ENCODE measurements at regions of chr17 and their contacts with region 1.

Region 1: DNA sequence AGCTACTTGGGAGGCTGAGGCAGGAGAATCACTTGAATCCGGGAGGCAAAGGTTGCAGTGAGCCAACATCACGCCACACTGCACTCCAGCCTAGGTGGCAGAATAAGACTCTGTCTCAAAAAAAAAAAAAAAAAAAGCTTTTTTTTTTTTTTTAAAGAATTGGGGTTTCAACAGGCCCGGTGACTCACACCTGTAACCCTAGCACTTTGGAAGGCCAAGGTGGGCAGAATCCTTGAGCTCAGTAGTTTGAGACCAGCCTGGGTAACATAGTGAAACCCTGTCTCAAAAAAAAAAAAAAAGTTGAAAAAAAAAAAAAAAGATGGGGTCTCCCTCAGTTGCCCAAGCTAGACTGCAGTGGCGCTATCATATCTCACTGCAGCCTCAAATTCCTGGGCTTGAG is 6.6 kb upstream of the HEXIM2 start:
- DNase-seq: no peak
- ATAC-seq: no peak
- H3K4me3 Mint-ChIP-seq: no peak overlapping the region
- H3K27ac Mint-ChIP-seq: no peak overlapping the region; the same call in 1 of the 2 replicates
- H3K4me1 Mint-ChIP-seq: peaks cover 36% of the 10 kb centered on the region
- H3K27me3 Mint-ChIP-seq: no peaks in the 10 kb centered on the region
- CTCF ChIP-seq: no peak

Region 2: GRCh38 chr17:45060797-45061605 is 94.0 kb before region 1 on chr17 and contains the start of gene NMT1:
- CTCF ChIA-PET with region 1: no interaction called
- POLR2A ChIA-PET with region 1: no interaction called
- DNase-seq: peak; percentile 98
- ATAC-seq: peak; percentile 96
- H3K4me3 Mint-ChIP-seq: peak within 1 kb of the TSS; percentile 99
- H3K27ac Mint-ChIP-seq: peak within 1 kb of the TSS; percentile 100
- H3K4me1 Mint-ChIP-seq: peaks cover 4% of the 10 kb centered on the region
- H3K27me3 Mint-ChIP-seq: no peaks in the 10 kb centered on the region
- CTCF ChIP-seq: no peak
- total RNA-seq, gene NMT1: 152 to 162 TPM (median 153 TPM) in 3 replicates

Region 3: DNA sequence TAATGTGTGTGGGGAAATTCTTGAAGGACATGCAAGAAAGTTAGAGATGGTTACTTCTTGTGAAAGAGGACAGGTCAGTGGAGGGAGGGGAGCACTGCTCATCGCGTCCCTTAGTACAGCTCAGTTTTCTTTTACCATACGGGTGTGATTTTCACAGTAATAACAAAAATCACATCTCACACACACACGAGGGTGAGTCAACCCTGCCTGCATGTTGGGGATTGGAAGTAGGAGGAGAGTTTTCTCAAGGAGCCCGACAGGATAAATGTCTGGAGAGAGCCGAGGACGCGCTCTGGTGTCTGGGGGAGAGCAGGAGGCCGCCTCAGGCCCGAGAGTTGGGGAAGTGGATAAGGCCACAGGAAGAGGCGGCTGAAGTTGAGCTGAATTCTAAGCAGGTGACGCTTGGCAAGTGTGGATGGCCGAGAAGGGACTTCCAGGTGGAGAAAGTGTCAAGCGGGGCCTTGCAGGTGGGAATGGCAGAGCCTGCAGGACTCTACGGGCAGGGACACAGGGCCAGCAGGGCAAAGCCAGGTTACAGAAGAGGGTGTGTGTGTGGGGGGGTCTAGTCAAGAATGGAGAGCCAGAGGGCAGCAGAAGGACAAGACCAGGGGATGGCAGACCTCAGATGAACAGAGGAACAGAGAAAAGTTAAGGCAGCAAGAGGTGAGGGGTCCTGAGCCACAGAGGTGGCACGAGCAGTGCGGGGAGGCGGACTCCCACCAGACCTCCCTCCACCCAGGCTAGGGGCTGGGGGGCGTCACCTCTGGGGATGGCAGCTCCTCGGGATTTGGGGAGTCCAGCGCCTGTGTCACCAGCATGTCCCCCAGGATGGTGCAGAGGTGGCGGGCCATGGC is 38.9 kb before region 1 on chr17:
- CTCF ChIA-PET with region 1: no interaction called
- POLR2A ChIA-PET with region 1: no interaction called
- DNase-seq: no peak
- ATAC-seq: no peak
- H3K4me3 Mint-ChIP-seq: no peak overlapping the region
- H3K27ac Mint-ChIP-seq: peak overlapping the region; percentile 66; the same call in 1 of the 2 replicates
- H3K4me1 Mint-ChIP-seq: peaks cover 14% of the 10 kb centered on the region
- H3K27me3 Mint-ChIP-seq: no peaks in the 10 kb centered on the region
- CTCF ChIP-seq: no peak

Region 4: GRCh38 chr17:45172454-45173286 is 17.6 kb after region 1 on chr17:
- CTCF ChIA-PET with region 1: interaction called, 96 read pairs
- POLR2A ChIA-PET with region 1: interaction called, 75 read pairs
- DNase-seq: peak; percentile 38
- ATAC-seq: peak; percentile 20
- H3K4me3 Mint-ChIP-seq: peak overlapping the region; percentile 5; the same call in 1 of the 2 replicates
- H3K27ac Mint-ChIP-seq: peak overlapping the region; percentile 98
- H3K4me1 Mint-ChIP-seq: peaks cover 29% of the 10 kb centered on the region
- H3K27me3 Mint-ChIP-seq: no peaks in the 10 kb centered on the region
- CTCF ChIP-seq: no peak

Region 5: DNA sequence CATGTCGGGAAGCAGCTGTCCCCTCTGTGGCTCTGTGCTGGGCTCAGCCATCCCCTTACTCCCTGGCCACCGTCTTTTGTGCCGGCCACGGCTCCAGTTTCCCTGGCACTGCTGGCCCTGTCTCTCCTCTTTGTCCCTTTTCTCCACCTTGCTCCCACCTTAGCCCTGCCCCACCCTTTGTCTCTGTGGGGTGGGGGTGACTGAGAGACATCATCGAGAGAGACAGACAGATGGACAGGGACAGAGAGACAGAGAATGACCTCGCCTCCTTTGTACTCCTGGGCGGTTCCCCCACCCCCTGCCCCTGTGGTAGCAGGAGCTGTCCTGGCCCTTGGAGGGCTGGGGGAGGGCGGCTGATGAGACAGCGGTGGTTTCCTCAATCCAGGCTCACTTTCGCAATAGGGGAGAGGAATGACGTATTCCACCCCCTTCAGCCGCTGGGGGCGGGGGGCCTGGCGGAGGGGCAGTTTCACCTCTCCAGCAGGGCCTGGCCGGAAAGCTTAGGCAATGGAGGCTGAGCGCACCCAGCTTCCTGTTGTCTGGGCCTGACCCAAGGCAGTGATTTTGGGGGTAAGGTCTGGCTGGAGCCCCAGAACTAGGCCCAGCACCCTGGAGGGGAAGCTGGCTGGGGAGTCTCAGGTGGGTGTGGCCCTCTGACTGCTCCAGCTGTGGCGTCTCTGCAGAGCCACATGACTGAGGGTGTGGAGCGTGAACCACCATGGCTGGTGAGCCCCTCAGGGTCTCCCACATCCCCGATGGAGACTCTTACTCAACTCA is 73.9 kb after region 1 on chr17:
- CTCF ChIA-PET with region 1: interaction called, 11 read pairs
- POLR2A ChIA-PET with region 1: interaction called, 5 read pairs
- DNase-seq: peak; percentile 59
- ATAC-seq: peak; percentile 27
- H3K4me3 Mint-ChIP-seq: no peak overlapping the region
- H3K27ac Mint-ChIP-seq: no peak overlapping the region
- H3K4me1 Mint-ChIP-seq: peaks cover 20% of the 10 kb centered on the region
- H3K27me3 Mint-ChIP-seq: peaks cover 26% of the 10 kb centered on the region
- CTCF ChIP-seq: no peak